Activated CD8-positive, alpha-beta T cell treated with anti-CD3 and anti-CD28 coated beads for 36 hours (primary cell): ENCODE measurements at regions of chr2 and their contacts with region 1.

Region 1: DNA sequence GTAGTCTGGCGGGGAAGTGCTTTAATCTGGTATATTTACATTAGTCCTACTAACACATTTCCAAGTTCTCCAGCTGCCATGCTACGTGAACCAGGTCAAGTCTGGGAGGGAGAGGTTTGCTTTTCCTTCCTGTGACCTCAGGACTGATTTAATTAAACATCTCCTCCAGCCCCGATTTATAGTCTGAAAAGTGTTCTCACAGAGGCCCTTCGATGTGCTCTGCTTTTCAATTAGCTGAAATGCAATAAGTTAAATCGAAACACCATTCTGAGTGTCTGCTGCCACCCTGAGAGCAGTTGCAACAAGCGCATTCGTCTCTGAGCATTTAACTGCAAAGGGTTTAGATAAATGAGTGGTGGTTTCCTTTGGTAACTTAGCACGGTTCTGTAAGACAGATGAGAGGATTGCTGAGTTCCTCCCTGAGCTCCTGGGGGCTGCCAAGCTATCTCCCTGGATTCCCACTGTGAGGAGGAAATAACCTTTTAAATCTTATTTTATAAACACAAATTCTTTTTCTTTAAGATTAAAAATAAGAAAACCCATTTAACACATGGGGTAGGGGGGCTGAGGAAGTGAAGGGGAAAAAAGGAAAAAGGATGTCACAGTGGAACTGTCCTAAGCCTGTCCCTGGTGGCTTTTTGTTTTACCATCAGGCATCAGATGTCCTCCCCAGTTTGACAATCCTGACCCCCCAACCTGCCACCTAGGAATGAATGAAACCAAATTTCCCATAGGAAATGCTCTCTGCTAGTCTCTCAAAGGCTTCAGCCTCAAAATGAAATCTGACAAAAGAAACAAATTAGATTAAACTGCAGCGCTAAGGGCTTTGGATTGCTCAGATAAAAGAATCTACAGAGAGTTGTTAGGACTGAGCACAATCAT is 56.5 kb upstream of the CREB1 start:
- DNase-seq: peak; percentile 64
- ATAC-seq: peak; percentile 81
- H3K4me3 Mint-ChIP-seq: no peak overlapping the region
- H3K27ac Mint-ChIP-seq: no peak overlapping the region
- H3K4me1 Mint-ChIP-seq: peaks cover 16% of the 10 kb centered on the region
- H3K27me3 Mint-ChIP-seq: no peaks in the 10 kb centered on the region
- CTCF ChIP-seq: peak; percentile 51

Region 2: DNA sequence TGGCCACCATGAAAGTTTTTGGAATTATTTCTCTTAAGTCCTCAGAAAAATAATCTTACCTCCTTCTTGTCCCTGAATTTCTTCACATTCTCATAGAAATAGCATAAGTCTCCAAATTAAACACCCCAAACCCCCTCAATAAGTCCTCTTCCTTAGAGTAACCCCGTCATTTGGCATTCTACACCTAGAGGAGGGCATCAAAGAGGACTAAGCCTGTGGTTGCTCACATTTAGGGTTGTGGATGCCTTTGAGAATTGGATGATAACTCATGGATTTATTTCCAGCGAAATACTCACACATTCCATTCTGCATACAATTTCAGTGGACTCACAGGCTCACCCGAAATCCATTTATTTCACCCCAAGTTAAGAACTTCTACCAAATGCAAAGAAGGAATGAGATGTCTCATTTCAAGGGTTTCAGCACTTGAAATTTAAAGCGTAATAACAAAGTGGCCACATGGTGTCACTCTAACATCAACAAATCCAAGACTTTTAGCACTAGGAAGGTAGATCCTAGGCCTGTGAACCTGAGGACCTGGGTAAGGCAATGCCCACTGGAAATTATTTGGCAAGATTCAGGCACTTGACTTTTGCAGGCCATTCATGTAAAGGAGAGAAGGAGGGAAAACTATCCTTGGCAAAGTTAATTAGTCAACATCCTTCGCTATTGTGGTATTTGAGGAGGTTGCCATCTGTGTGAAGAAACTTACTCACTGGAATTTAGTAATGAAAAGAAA is 779.7 kb before region 1 on chr2:
- CTCF ChIA-PET with region 1: interaction called, 9 read pairs
- POLR2A ChIA-PET with region 1: no interaction called
- intact Hi-C with region 1: loop called (anchors 5 kb)
- DNase-seq: peak; percentile 33
- ATAC-seq: peak; percentile 49
- H3K4me3 Mint-ChIP-seq: no peak overlapping the region
- H3K27ac Mint-ChIP-seq: no peak overlapping the region
- H3K4me1 Mint-ChIP-seq: peaks cover 3% of the 10 kb centered on the region
- H3K27me3 Mint-ChIP-seq: no peaks in the 10 kb centered on the region
- CTCF ChIP-seq: peak; percentile 76

Region 3: DNA sequence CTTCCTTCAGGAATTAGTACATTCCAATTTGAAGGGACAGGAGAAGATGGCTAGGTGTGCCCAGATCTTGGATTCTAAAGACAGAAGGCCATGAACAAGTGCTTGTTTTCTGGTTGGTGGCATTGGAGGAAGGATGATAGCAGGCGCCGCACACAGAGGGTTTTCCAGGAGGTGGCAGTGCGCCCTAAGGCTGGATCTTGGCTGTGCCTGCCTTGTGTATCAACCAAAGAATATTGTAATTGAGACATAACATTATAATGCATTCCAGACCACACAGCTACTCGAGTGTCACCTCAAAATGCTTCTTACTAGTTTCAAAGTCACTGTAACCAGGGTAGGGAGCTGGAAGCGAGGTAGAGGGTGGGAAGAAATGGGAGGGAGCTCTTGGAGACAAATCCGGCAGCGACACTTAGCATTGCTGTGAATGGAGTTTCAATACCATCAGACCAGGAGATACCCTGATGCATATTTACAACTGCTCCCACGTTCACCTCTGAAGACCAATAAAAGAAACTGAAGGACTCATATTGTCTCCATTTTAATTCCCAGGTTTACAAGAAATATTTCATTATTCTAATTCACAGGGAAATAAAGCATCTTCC is 491.4 kb before region 1 on chr2:
- CTCF ChIA-PET with region 1: interaction called, 12 read pairs
- POLR2A ChIA-PET with region 1: no interaction called
- intact Hi-C with region 1: loop called (anchors 2 kb)
- DNase-seq: peak; percentile 68
- ATAC-seq: peak; percentile 60
- H3K4me3 Mint-ChIP-seq: no peak overlapping the region
- H3K27ac Mint-ChIP-seq: no peak overlapping the region
- H3K4me1 Mint-ChIP-seq: peaks cover 7% of the 10 kb centered on the region
- H3K27me3 Mint-ChIP-seq: peaks cover 3% of the 10 kb centered on the region
- CTCF ChIP-seq: peak; percentile 38

Region 4: DNA sequence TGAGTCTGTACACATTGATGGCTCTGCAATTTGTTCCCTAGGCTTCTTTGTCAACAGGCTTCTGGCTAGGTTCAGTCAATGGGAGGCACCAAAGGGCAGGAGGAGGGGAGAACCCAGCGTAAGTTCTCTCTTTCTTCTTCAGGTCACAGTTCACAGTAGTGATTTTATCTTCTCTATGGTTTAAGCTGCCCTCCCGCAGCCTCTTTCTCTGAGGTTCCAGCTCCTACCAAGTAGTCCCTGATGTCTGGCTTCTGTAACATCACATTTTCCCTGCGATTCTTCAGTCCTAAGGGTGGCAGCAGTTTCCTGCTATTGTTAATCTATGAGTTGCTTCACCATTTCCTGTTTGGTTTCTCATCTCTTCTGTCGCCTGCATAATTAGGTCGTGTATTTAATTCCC is 426.6 kb before region 1 on chr2:
- CTCF ChIA-PET with region 1: interaction called, 8 read pairs
- POLR2A ChIA-PET with region 1: no interaction called
- intact Hi-C with region 1: loop called (anchors 5 kb)
- DNase-seq: peak; percentile 33
- ATAC-seq: peak; percentile 90
- H3K4me3 Mint-ChIP-seq: no peak overlapping the region
- H3K27ac Mint-ChIP-seq: no peak overlapping the region
- H3K4me1 Mint-ChIP-seq: peaks cover 7% of the 10 kb centered on the region
- H3K27me3 Mint-ChIP-seq: peaks cover 1% of the 10 kb centered on the region
- CTCF ChIP-seq: no peak

Region 5: GRCh38 chr2:207558106-207558505 is 84.8 kb after region 1 on chr2:
- CTCF ChIA-PET with region 1: no interaction called
- POLR2A ChIA-PET with region 1: no interaction called
- intact Hi-C with region 1: no loop called
- DNase-seq: no peak
- ATAC-seq: no peak
- H3K4me3 Mint-ChIP-seq: no peak overlapping the region
- H3K27ac Mint-ChIP-seq: no peak overlapping the region
- H3K4me1 Mint-ChIP-seq: peaks cover 27% of the 10 kb centered on the region
- H3K27me3 Mint-ChIP-seq: no peaks in the 10 kb centered on the region
- CTCF ChIP-seq: no peak